Transverse colon (tissue), 4 donors: ENCODE measurements at regions of chr6 and their contacts with region 1.

Region 1: GRCh38 chr6:41318654-41319565 is 16.5 kb upstream of the NCR2 start:
- DNase-seq: peak; percentile 81
- H3K4me3 ChIP-seq: peak overlapping the region in 2 of 4 donors; percentile 8 to 37
- H3K27ac ChIP-seq: no peak overlapping the region
- H3K4me1 ChIP-seq: peaks cover 0 to 8% (median 1%) of the 10 kb centered on the region in 4 donors
- H3K27me3 ChIP-seq: peaks cover 48% of the 10 kb centered on the region
- CTCF ChIP-seq: peak; percentile 98 to 100 (median 100)
- EP300 ChIP-seq: no peak
- POLR2A ChIP-seq: no peak

Region 2: GRCh38 chr6:41092421-41093140 is 226.3 kb before region 1 on chr6:
- in situ Hi-C with region 1: loop called in 1 of 4 experiments (anchors 25 kb)
- intact Hi-C with region 1: no loop called
- DNase-seq: no peak
- H3K4me3 ChIP-seq: no peak overlapping the region
- H3K27ac ChIP-seq: no peak overlapping the region
- H3K4me1 ChIP-seq: no peaks in the 10 kb centered on the region
- H3K27me3 ChIP-seq: no peaks in the 10 kb centered on the region
- CTCF ChIP-seq: peak in 1 of 5 experiments; percentile 12
- EP300 ChIP-seq: no peak
- POLR2A ChIP-seq: no peak

Region 3: GRCh38 chr6:41334482-41335040 is 15.7 kb after region 1 on chr6:
- in situ Hi-C with region 1: no loop called
- intact Hi-C with region 1: no loop called
- DNase-seq: no peak
- H3K4me3 ChIP-seq: no peak overlapping the region
- H3K27ac ChIP-seq: no peak overlapping the region
- H3K4me1 ChIP-seq: no peaks in the 10 kb centered on the region
- H3K27me3 ChIP-seq: peaks cover 16% of the 10 kb centered on the region
- CTCF ChIP-seq: no peak
- EP300 ChIP-seq: no peak
- POLR2A ChIP-seq: no peak